Adrenal gland (tissue), 19 donors: ENCODE measurements at regions of chr1 and their contacts with region 1.

Region 1: GRCh38 chr1:1890506-1891348 is at the start of gene GNB1:
- DNase-seq: peak; percentile 79 to 90 (median 86)
- H3K4me3 ChIP-seq: peak within 1 kb of the TSS; percentile 33 to 93 (median 80)
- H3K27ac ChIP-seq: peak within 1 kb of the TSS in 4 of 5 donors; percentile 86 to 99 (median 92)
- H3K4me1 ChIP-seq: peaks cover 43 to 69% of the 10 kb centered on the region in 2 donors
- H3K27me3 ChIP-seq: no peaks in the 10 kb centered on the region
- CTCF ChIP-seq: no peak
- POLR2A ChIP-seq: peak; percentile 83
- total RNA-seq, gene GNB1: 79.6 to 331 (median 172) TPM

Region 2: GRCh38 chr1:1788646-1789431 is 101.9 kb before region 1 on chr1:
- intact Hi-C with region 1: loop called in 1 of 2 experiments (anchors 5 kb)
- DNase-seq: peak in 6 of 7 donors; percentile 57 to 77 (median 65)
- H3K4me3 ChIP-seq: no peak overlapping the region
- H3K27ac ChIP-seq: no peak overlapping the region
- H3K4me1 ChIP-seq: no peaks in the 10 kb centered on the region
- H3K27me3 ChIP-seq: no peaks in the 10 kb centered on the region
- CTCF ChIP-seq: peak in 5 of 6 experiments; percentile 16 to 42 (median 40)
- POLR2A ChIP-seq: no peak

Region 3: DNA sequence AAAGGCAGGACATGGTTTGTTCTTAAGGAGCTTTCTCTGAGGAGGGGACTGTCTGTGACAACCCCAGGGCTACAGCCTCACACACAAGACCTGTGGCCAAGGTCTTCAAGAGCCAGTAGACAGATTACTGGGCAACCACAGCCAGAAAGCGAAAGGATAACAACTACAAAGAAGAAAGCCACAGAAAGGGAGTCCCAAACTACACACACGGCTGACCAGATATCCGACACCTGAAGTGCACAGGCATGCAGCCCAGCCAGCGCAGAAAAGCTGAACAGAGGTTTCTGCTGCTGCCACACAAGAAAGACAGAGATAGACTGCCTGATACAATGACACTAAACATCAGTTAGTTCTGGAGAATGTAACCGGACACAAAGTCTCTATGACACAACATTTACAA is 91.0 kb before region 1 on chr1:
- intact Hi-C with region 1: no loop called
- DNase-seq: no peak
- H3K4me3 ChIP-seq: no peak overlapping the region
- H3K27ac ChIP-seq: no peak overlapping the region
- H3K4me1 ChIP-seq: no peaks in the 10 kb centered on the region
- H3K27me3 ChIP-seq: no peaks in the 10 kb centered on the region
- CTCF ChIP-seq: no peak
- POLR2A ChIP-seq: no peak

Region 4: DNA sequence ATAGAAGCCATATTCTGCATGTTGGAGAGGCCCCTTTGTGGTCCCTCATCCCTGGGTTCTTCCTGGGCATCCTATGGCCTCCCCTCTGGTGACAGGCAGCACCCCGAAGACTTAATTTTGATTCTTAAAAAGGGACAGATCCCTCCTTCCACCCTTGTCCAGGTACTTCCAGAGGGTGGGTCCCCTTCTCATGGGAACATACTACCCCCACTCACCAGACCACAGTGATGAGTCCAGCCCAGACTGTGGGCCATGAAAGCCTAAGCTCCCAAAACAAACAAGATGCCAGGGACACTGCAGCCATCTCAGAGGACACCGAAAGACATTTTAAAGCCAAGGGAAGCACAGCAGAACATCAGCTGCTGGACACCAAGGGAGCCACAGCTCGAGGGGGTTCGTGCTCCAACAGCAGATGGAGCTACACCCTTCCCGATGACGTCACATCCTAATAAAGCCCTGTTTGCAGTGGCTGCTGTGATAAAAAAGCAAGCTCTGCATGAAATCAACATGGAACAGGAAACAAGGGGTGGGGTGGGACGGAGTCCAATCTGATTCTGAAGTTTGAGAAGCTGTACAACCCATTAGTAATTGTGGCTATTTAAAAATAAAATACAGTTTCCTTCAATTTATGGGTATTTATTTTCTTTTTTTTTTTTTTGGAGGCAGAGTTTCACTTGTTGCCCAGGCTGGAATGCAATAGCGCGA is 32.2 kb before region 1 on chr1:
- intact Hi-C with region 1: loop called in 1 of 2 experiments (anchors 5 kb)
- DNase-seq: peak; percentile 53 to 94 (median 76)
- H3K4me3 ChIP-seq: no peak overlapping the region
- H3K27ac ChIP-seq: peak overlapping the region in 3 of 5 donors; percentile 45 to 78 (median 71)
- H3K4me1 ChIP-seq: peaks cover 21 to 74% of the 10 kb centered on the region in 2 donors
- H3K27me3 ChIP-seq: no peaks in the 10 kb centered on the region
- CTCF ChIP-seq: peak in 4 of 6 experiments; percentile 17 to 34 (median 23)
- POLR2A ChIP-seq: no peak